Left ventricle myocardium superior (tissue), 1 donor: ENCODE measurements at regions of chr3 and their contacts with region 1.

Region 1: GRCh38 chr3:153026026-153026425 is 136.0 kb upstream of the RAP2B start:
- DNase-seq: no peak
- ATAC-seq: no peak

Region 2: DNA sequence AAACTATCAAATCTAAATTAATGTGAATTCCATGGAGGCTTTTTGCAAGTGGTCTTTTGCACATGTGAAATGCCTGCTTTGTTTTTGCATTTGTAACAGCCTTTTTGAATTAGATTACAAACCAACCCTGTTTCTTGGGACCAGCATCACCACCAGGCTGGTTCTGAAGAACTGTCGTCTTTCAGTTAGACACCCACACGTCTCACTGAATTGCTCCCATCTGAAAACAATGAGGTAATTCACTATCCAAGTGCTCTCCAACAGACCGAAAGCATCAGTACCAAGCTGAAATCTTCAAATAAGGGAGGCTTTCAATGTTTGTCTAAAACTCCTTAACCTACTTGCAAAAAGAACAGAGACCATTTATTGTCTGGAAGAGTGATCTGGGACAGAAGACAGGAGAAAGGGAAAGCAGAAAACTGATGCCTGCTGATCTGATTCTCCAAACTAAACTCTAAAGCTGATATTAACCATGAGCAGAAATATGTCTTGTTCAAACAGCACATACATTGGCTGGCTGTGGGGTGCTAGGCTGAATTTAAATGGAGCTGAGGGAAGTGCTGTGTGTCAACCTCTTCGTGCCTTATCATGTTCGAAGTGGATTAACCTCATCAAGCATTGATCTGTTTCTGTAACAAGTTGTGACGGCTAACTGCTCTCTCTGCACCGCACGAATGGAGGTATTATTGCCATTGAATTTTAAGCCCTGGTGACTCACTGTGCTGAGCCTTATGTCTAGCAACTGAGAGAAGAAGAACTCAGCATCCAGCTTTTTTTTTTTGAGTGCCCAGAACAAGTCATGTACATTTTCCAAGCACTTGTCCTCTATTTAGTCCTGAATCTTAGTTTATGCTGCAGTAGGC is 404.8 kb before region 1 on chr3:
- intact Hi-C with region 1: no loop called
- DNase-seq: no peak
- ATAC-seq: peak; percentile 69

Region 3: GRCh38 chr3:152825566-152825965 is 200.5 kb before region 1 on chr3:
- intact Hi-C with region 1: no loop called
- DNase-seq: no peak
- ATAC-seq: no peak

Region 4: GRCh38 chr3:153768561-153769469 is 742.8 kb after region 1 on chr3:
- intact Hi-C with region 1: loop called (anchors 5 kb)
- DNase-seq: no peak
- ATAC-seq: peak; percentile 74